Activated T-helper 2 cell treated with anti-CD3 and anti-CD28 coated beads, Interferon-gamma antibody, Interleukin-2, Interleukin-4, amounts not matched to agents 10 μg/mL and 5 μg/mL and 100 μg/mL, durations not matched to agents 14 hours and 24 hours and 36 hours (primary cell): ENCODE measurements at regions of chr4 and their contacts with region 1.

Region 1: DNA sequence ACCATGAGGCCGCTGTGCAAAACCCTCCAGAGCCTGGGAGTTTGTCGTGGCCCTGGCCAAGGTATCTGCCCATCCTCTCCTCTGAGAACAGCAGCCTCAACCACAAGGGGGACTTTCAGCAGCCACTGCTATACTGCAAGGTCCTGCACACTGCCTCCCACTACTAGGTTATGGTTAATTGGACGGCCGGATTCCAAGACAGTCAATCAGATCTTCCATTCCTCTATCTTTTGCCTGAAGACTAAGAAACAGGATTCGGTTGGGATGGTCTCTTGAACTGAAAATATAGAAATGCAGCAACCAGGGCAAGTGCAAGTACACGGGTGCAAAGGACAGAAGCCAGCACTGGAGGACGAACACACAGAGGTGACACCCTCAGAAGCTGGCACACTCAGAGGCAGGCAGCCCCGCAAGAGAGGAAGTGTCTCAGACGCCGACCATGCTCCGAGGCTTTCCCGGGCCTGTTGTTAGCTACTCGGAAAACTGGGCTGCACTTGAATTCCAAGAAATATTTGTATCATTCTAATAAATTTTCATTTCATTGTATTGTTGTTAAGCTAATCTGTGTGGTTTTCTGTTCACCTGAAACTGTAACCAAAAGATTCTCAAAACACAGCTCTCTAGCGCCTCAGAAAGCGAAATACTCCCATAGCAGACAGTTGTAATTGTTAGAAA is 63.3 kb downstream of the AFAP1 start:
- DNase-seq: no peak
- H3K4me3 Mint-ChIP-seq: peak overlapping the region; percentile 22
- H3K27ac Mint-ChIP-seq: peak overlapping the region; percentile 38
- H3K4me1 Mint-ChIP-seq: peaks cover 39% of the 10 kb centered on the region
- H3K27me3 Mint-ChIP-seq: no peaks in the 10 kb centered on the region

Region 2: DNA sequence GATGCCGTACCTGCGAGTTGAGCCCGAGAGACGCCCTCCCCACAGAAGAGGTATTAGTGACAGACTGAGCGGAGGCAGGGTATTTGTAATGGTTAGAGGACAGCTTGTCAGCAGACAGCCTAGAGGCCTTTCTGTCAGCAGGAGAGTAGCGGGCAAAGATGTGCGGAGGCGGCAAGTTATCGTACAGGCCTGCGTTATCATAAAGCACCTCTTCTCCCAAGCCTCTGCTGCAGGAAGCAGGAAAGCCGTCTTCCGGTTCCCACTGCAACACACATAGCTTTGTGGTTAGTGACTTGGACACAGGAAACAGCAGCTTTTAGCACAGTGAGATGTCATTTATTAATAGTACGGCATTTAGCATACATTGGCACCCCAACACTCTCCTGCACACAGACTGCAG is 95.0 kb before region 1 on chr4:
- intact Hi-C with region 1: no loop called
- DNase-seq: no peak
- H3K4me3 Mint-ChIP-seq: no peak overlapping the region
- H3K27ac Mint-ChIP-seq: peak overlapping the region; percentile 79
- H3K4me1 Mint-ChIP-seq: peaks cover 44% of the 10 kb centered on the region
- H3K27me3 Mint-ChIP-seq: no peaks in the 10 kb centered on the region

Region 3: GRCh38 chr4:7827991-7828720 is 48.2 kb before region 1 on chr4:
- intact Hi-C with region 1: loop called (anchors 5 kb)
- DNase-seq: peak; percentile 19
- H3K4me3 Mint-ChIP-seq: peak overlapping the region; percentile 4
- H3K27ac Mint-ChIP-seq: peak overlapping the region; percentile 67
- H3K4me1 Mint-ChIP-seq: peaks cover 58% of the 10 kb centered on the region
- H3K27me3 Mint-ChIP-seq: no peaks in the 10 kb centered on the region

Region 4: DNA sequence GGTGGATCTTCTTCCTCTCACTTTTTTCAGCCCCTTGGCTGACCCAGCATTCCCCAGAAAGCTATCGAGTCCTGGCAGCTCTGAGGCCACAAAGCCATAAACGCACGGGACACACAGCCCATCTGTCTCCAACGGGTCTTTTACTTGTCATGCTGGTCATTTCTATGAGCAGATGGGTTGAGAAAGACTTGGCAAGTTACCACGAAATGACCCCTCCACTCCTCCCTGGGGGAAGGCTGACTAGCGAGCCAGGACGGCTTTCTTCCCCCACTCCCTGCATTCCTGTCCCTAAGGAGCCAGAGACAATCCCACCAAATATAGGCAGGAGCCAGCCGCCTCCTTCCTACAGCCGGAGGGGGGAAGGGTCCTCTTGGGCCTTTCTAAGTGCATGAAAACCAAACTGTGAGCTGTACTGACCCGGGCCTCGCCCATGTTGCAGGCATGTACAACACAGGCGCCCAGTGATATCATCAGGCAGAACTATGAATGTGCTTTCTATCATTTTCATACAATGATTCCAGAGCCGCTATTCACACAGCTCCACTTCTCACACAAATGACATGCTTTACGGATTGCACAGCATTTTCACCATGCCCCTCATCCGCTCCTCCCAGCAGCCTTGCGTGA is 34.7 kb after region 1 on chr4:
- intact Hi-C with region 1: no loop called
- DNase-seq: no peak
- H3K4me3 Mint-ChIP-seq: no peak overlapping the region
- H3K27ac Mint-ChIP-seq: no peak overlapping the region
- H3K4me1 Mint-ChIP-seq: peaks cover 31% of the 10 kb centered on the region
- H3K27me3 Mint-ChIP-seq: no peaks in the 10 kb centered on the region

Region 5: DNA sequence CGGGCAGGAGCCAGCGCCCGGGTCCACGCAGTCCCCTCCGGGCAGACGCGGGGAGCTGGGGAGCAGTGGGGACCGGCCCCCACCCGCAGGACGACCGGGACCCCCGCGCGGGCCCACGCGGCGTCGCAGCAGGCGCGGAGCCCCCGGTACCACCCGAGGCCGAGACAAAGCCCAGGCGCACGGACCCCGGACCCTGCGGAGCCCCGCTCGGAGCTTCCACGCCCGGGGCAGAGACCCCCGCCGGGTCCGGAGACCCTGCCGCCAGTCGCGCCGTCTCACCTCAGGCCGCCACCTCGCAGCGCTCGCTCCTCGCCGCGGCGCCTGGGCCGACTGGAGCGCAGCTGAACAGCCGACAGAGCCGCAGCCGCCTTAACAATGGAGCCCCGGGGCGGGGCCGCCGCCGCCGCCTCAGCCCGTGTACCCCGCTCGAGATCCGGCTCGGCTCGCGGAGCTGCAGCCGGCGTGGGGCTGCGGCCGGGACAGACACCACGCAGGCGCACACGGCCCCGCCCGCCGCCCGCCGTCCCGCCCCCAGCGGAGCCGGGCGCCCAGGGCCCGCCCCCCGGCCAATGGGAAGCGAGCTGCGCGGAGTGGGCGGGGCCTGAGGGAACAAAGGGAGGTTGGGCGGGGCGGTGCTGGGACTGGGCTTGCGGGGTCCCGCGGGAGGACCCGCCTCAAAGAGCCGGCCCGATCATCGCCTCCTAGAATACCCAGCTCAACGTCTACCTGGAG is 63.2 kb after region 1 on chr4 and contains the start of gene AFAP1:
- intact Hi-C with region 1: loop called (anchors 5 kb)
- DNase-seq: peak; percentile 84
- H3K4me3 Mint-ChIP-seq: peak within 1 kb of the TSS; percentile 57
- H3K27ac Mint-ChIP-seq: no peak within 1 kb of the TSS
- H3K4me1 Mint-ChIP-seq: peaks cover 25% of the 10 kb centered on the region
- H3K27me3 Mint-ChIP-seq: peaks cover 8% of the 10 kb centered on the region
- total RNA-seq, gene AFAP1: 53.7 and 57.6 TPM in 2 replicates